Psoas muscle (tissue), 8 donors: ENCODE measurements at regions of chr12 and their contacts with region 1.

Region 1: DNA sequence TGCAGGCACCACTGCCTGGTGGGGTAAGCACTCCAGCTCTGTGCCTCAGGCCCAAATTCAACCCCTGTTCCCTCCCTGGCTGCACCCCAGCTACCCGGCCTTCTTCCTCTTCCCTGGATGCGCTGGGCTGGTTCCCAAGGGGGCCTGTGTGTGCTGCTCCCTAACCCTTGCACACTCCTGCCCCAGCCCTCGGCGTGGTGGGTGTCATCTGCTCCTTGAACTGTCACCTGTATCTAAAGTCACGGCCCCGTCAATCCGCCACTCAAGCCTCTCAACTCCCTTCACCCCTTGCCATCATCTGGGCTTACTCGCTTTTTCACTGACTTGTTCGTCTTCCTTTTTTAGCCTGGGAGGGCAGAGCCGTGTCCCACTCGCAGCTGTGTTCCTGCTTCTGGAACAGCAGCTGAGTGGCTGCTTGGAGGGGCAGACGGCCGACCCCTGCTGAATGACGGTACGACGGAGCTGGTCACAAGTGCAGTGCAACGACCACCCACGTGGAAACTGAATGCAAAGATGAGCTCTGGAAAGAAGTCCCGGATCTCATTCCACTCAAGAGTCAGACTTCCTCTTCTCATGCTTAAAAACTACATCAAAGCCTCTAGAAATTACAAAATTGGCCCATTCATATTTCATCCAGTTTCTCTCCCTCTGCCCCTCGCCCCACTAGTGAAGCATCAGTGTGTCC is 138.9 kb downstream of the PIWIL1 start:
- DNase-seq: peak in 1 of 2 donors; percentile 38
- ATAC-seq: no peak
- H3K4me3 ChIP-seq: no peak overlapping the region
- H3K27ac ChIP-seq: no peak overlapping the region
- H3K4me1 ChIP-seq: no peaks in the 10 kb centered on the region
- H3K27me3 ChIP-seq: peaks cover 0 to 4% (median 0%) of the 10 kb centered on the region in 3 donors
- CTCF ChIP-seq: no peak

Region 2: DNA sequence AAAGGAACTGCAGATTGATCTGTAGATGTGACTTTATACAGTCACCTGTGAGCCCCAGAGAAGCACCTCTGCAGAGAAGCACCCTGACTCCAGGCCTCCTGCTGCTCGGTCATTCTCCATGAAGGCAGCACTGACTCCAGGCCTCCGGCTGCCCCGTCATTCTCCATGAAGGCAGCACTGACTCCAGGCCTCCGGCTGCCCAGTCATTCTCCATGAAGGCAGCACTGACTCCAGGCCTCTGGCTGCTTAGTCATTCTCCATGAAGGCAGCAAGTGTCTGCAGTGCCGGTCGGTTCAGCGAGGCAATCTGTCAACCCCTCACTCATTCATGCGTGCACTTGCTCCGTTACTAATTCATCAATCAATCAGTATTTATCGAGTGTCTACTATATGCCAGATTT is 21.4 kb after region 1 on chr12:
- intact Hi-C with region 1: loop called in 1 of 2 experiments (anchors 2 kb)
- DNase-seq: no peak
- ATAC-seq: peak in 1 of 4 donors; percentile 13
- H3K4me3 ChIP-seq: no peak overlapping the region
- H3K27ac ChIP-seq: no peak overlapping the region
- H3K4me1 ChIP-seq: no peaks in the 10 kb centered on the region
- H3K27me3 ChIP-seq: no peaks in the 10 kb centered on the region
- CTCF ChIP-seq: no peak